ENCODE measurements at regions of chr11 and their contacts with region 1.

Region 1: GRCh38 chr11:133082851-133083488 is 449.3 kb downstream of the OPCML start:
- DNase-seq: peak; percentile 71 to 88 (median 86)
- ATAC-seq: peak; percentile 93 to 96
- H3K4me3 ChIP-seq: peak overlapping the region; percentile 7
- H3K27ac ChIP-seq: no peak overlapping the region
- H3K4me1 ChIP-seq: no peaks in the 10 kb centered on the region
- H3K27me3 ChIP-seq: no peaks in the 10 kb centered on the region

Region 2: GRCh38 chr11:133156986-133157745 is 74.2 kb after region 1 on chr11:
- intact Hi-C with region 1: loop called (anchors 5 kb)
- DNase-seq: no peak
- ATAC-seq: no peak
- H3K4me3 ChIP-seq: no peak overlapping the region
- H3K27ac ChIP-seq: no peak overlapping the region
- H3K4me1 ChIP-seq: no peaks in the 10 kb centered on the region
- H3K27me3 ChIP-seq: no peaks in the 10 kb centered on the region

Region 3: DNA sequence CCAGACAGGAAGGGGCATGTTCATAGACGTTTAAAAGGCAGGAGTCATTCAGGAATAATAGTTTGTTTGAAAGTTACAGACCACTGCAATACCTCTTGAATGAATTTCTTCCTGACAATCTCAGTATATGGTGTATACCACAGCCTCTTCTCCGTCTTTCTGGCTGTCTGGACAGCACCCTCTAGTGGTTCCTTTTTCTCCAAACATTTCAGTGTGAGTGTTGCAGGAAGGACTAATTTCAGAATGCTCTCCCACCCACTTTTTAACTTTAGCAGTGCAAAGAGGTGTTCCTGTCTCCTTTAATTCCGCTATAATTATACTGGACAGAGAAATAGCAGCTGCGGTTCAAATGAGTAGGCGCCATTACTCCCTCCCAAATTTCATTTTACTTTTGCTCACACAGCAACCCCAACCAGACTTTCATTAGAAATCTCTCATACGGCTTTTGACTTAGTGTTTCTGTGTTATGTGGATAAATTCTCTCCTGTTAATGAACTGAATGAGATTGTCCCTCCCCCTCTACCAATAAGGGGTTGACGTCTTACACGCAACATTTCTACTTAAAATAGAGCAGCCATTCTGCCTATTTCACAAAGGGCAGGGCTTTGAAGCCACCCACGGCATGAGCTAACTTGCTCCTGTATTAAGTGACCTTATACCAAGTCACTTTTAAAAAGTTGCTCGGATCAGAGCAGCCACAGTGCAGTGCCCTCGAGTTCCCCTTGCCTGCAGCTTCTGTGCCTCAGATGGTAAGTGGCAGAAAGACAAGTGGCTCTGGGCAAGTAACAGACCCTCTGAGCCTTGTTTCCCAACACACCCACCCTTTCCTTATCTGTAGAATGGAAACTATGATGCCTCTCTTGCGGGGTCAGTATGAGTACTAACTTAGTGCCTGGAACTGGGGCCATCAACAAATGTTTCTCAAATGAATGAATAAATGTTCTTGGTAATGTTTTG is 80.8 kb after region 1 on chr11:
- intact Hi-C with region 1: loop called (anchors 5 kb)
- DNase-seq: no peak
- ATAC-seq: peak; percentile 78 to 90
- H3K4me3 ChIP-seq: no peak overlapping the region
- H3K27ac ChIP-seq: no peak overlapping the region
- H3K4me1 ChIP-seq: no peaks in the 10 kb centered on the region
- H3K27me3 ChIP-seq: no peaks in the 10 kb centered on the region

Region 4: DNA sequence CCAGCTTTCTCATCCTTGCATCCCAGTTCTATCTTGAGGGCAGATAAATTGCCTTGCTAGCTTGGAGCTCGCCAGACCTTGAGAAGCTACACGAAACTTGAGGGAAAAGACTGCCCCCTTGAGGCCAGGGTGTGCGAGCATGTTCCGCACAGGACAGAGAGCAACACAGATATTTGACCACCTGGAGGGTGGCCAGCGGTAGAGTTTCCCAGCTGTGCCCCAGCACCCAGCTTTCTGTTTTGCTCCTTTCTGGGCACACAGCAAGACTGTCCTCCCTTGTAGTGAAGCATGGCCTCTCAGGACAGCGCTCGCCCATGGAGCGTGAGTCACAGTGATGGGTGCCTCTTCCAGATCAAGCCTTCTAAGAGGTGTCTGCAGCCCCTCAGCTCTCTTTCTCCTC is 738.8 kb after region 1 on chr11:
- intact Hi-C with region 1: loop called in 1 of 4 experiments (anchors 10 kb)
- DNase-seq: peak; percentile 60 to 82 (median 77)
- ATAC-seq: peak; percentile 75 to 81
- H3K4me3 ChIP-seq: no peak overlapping the region
- H3K27ac ChIP-seq: no peak overlapping the region
- H3K4me1 ChIP-seq: no peaks in the 10 kb centered on the region
- H3K27me3 ChIP-seq: no peaks in the 10 kb centered on the region

Region 5: GRCh38 chr11:133834682-133835592 is 752.0 kb after region 1 on chr11:
- intact Hi-C with region 1: loop called in 2 of 4 experiments (anchors 2 to 5 kb)
- DNase-seq: no peak
- ATAC-seq: peak; percentile 71 to 88
- H3K4me3 ChIP-seq: no peak overlapping the region
- H3K27ac ChIP-seq: no peak overlapping the region
- H3K4me1 ChIP-seq: no peaks in the 10 kb centered on the region
- H3K27me3 ChIP-seq: no peaks in the 10 kb centered on the region